Motor neuron (in vitro differentiated cells): ENCODE measurements at regions of chr21 and their contacts with region 1.

Region 1: DNA sequence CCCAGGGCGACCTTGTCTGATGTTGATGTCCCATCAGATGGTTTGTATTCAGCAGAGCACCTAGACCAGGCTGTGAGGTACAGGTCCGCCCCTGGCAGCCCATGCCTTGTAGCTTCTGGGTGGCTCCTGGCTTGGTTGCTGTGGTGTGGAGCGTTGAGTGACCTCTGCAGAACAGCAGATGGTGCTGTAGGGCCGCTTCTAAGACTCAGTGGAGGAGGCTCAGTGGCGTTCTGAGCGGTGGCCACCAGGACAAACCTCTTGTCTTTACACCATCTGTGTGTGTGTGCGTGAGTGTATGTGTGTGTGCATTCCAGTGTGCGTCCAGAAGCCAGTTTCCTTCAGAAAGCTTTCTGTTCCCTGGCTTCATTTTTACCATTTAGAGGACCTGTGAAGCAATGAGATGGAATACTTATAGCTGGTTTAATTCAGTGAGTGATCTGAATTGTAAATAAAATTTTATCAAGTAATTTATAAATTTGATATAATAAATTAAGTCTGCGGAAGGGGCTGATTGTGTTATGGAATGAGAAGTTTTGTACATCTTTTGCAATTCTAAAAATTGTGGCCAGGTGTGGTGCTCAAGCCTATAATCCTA is 66.1 kb downstream of the ADARB1 start:
- ATAC-seq: peak; percentile 84 to 97 (median 90)
- H3K4me3 ChIP-seq: no peak overlapping the region
- H3K27ac ChIP-seq: no peak overlapping the region
- H3K4me1 ChIP-seq: peaks cover 10 to 17% of the 10 kb centered on the region in 2 donors

Region 2: DNA sequence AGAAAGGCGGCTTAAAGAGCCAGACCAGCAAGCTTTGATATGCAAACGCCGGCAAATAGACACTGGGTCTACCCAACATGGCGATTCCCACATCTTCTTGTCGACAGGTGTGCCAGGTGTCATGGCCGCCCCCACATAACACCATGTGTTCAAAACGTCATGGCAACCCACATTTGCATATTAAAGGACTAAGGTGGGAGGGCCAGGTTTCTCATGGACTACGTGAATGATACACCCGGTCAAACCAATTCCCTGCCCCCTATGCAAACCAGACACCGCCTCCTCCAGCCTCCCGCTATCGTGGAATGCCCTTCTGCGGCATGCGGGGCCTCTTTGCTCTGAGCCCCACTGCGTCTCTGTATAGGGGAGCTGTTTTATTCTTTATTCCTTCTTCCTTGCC is 941.0 kb before region 1 on chr21:
- in situ Hi-C with region 1: no loop called
- ATAC-seq: no peak
- H3K4me3 ChIP-seq: no peak overlapping the region
- H3K27ac ChIP-seq: no peak overlapping the region
- H3K4me1 ChIP-seq: peaks cover 0 to 5% of the 10 kb centered on the region in 2 donors

Region 3: GRCh38 chr21:44939532-44940115 is 200.8 kb before region 1 on chr21 and contains the start of gene SLX9:
- in situ Hi-C with region 1: loop called in 3 of 9 experiments (anchors 10 to 25 kb)
- ATAC-seq: peak; percentile 93 to 98 (median 97)
- H3K4me3 ChIP-seq: peak within 1 kb of the TSS; percentile 67 to 100 (median 74)
- H3K27ac ChIP-seq: peak within 1 kb of the TSS; percentile 62 to 75
- H3K4me1 ChIP-seq: peaks cover 10 to 17% of the 10 kb centered on the region in 2 donors
- total RNA-seq, gene SLX9: 9.8 to 41.2 (median 15.3) TPM

Region 4: GRCh38 chr21:45244799-45245340 is 104.4 kb after region 1 on chr21:
- in situ Hi-C with region 1: no loop called
- ATAC-seq: no peak
- H3K4me3 ChIP-seq: no peak overlapping the region
- H3K27ac ChIP-seq: no peak overlapping the region
- H3K4me1 ChIP-seq: peaks cover 10% of the 10 kb centered on the region in 2 donors